Prostate gland (tissue), 2 donors: ENCODE measurements at regions of chr10 and their contacts with region 1.

Region 1: GRCh38 chr10:95474228-95475002 is 86.8 kb downstream of the SORBS1 start:
- DNase-seq: peak; percentile 31
- H3K4me3 ChIP-seq: no peak overlapping the region
- H3K27ac ChIP-seq: peak overlapping the region; percentile 64 to 79
- H3K4me1 ChIP-seq: peaks cover 9% of the 10 kb centered on the region
- H3K27me3 ChIP-seq: no peaks in the 10 kb centered on the region
- CTCF ChIP-seq: no peak
- POLR2A ChIP-seq: no peak

Region 2: GRCh38 chr10:95536017-95536416 is 61.6 kb after region 1 on chr10:
- intact Hi-C with region 1: loop called (anchors 5 kb)
- DNase-seq: peak; percentile 24
- H3K4me3 ChIP-seq: no peak overlapping the region
- H3K27ac ChIP-seq: peak overlapping the region; percentile 69 to 71
- H3K4me1 ChIP-seq: no peaks in the 10 kb centered on the region
- H3K27me3 ChIP-seq: no peaks in the 10 kb centered on the region
- CTCF ChIP-seq: no peak
- POLR2A ChIP-seq: no peak